ENCODE measurements at regions of chr1 and their contacts with region 1.

Region 1: GRCh38 chr1:10378081-10378841 is 20.6 kb upstream of the PGD start:
- DNase-seq: no peak
- H3K4me3 Mint-ChIP-seq: no peak overlapping the region
- H3K27ac Mint-ChIP-seq: no peak overlapping the region
- H3K4me1 Mint-ChIP-seq: no peaks in the 10 kb centered on the region
- H3K27me3 Mint-ChIP-seq: no peaks in the 10 kb centered on the region
- CTCF ChIP-seq: no peak

Region 2: GRCh38 chr1:9766759-9767442 is 611.4 kb before region 1 on chr1:
- CTCF ChIA-PET with region 1: no interaction called
- intact Hi-C with region 1: no loop called
- DNase-seq: no peak
- H3K4me3 Mint-ChIP-seq: no peak overlapping the region
- H3K27ac Mint-ChIP-seq: no peak overlapping the region
- H3K4me1 Mint-ChIP-seq: no peaks in the 10 kb centered on the region
- H3K27me3 Mint-ChIP-seq: no peaks in the 10 kb centered on the region
- CTCF ChIP-seq: no peak

Region 3: GRCh38 chr1:10430216-10431069 is 52.2 kb after region 1 on chr1 and contains the start of gene CENPS:
- CTCF ChIA-PET with region 1: no interaction called
- intact Hi-C with region 1: loop called (anchors 1 kb)
- DNase-seq: peak; percentile 91
- H3K4me3 Mint-ChIP-seq: peak within 1 kb of the TSS; percentile 94
- H3K27ac Mint-ChIP-seq: peak within 1 kb of the TSS; percentile 75
- H3K4me1 Mint-ChIP-seq: no peaks in the 10 kb centered on the region
- H3K27me3 Mint-ChIP-seq: no peaks in the 10 kb centered on the region
- CTCF ChIP-seq: peak; percentile 86
- total RNA-seq, gene CENPS: 18.0 and 21.3 TPM in 2 replicates

Region 4: DNA sequence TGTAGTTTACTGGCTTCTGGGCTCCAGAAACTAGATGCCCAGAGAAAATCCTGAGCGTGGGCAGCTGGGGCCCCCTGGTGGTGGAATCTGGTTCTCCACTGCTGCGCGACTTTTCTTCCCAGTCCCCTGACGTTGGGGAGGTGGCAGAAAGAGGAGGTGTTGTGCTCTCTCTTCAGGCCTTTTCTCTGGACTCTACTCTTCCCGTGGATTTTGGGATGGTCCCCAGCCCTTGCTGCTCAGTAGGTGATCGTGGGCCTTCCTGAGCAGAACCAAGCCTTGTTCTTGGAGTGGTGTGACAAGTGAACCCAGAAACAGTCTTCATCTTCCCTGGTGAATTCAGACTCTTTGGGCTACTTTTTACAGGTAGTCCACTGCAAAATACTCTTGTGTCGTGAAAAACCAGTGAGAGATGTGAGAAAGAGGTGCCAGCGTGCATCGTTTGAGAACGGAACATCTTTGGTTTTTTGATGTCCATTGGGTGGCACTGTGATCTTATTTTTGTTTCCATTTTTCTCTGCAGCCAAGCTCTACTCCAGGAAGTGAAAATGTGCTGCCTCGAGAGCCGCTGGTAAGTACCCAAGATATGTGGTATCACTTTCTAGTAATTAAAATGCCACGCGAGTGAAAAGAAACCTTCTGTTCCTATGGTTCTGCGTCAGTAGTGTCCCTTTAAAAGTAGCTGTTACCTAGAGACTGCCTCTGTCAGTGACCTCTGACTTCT is 116.7 kb after region 1 on chr1:
- CTCF ChIA-PET with region 1: no interaction called
- intact Hi-C with region 1: loop called (anchors 10 kb)
- DNase-seq: peak; percentile 81
- H3K4me3 Mint-ChIP-seq: peak overlapping the region; percentile 28
- H3K27ac Mint-ChIP-seq: no peak overlapping the region
- H3K4me1 Mint-ChIP-seq: peaks cover 19% of the 10 kb centered on the region
- H3K27me3 Mint-ChIP-seq: no peaks in the 10 kb centered on the region
- CTCF ChIP-seq: peak; percentile 76